Panc1 (cell line): ENCODE measurements at regions of chr1 and their contacts with region 1.

Region 1: DNA sequence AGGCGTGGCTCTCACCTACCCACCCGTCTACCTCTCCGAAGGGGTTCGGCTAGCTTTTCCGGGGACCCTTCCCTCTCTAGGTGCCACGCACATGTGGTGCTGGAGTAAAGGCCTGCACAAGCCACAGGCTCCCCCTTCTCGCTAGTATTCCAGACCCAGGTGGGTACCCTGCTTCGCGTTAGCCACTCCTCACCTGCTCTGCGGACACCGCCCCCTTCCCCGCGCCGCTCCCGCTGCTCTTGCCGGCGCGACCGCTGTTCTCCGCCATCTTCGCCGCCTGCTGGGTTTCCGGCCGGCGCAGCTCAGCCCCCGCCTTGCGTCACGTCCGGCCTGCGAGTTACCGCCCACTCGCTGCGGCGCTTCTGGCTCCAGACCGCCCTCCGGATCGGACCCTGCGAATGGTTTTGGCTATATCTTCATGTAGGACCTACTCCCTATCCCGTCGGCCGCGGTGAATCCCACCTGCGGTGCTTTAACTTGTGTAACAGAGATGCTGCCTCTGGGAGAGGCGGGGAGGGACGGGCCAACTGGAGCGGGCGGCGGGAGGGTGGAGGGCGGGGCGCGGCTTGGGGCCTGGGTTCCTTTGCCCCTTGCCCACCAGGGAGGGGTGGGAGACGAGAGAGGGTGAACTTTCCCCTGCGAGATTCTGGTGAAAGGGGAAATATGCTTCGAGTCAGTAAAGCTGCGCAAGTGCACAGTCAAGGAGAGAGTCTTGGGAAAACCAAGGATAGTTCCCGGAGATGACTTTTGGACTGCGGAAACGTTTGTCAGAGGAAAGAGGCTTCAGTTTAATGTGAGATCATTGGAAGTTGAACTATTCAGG is at the starts of genes NIT1 and PFDN2:
- DNase-seq: no peak
- ATAC-seq: peak; percentile 92
- H3K4me3 ChIP-seq: peak within 1 kb of the TSS; percentile 100
- H3K27ac ChIP-seq: peak within 1 kb of the TSS; percentile 98
- H3K4me1 ChIP-seq: peaks cover 36% of the 10 kb centered on the region
- H3K27me3 ChIP-seq: no peaks in the 10 kb centered on the region
- CTCF ChIP-seq: no peak
- total RNA-seq, gene NIT1: 31.3 TPM
- total RNA-seq, gene PFDN2: 98.6 TPM

Region 2: DNA sequence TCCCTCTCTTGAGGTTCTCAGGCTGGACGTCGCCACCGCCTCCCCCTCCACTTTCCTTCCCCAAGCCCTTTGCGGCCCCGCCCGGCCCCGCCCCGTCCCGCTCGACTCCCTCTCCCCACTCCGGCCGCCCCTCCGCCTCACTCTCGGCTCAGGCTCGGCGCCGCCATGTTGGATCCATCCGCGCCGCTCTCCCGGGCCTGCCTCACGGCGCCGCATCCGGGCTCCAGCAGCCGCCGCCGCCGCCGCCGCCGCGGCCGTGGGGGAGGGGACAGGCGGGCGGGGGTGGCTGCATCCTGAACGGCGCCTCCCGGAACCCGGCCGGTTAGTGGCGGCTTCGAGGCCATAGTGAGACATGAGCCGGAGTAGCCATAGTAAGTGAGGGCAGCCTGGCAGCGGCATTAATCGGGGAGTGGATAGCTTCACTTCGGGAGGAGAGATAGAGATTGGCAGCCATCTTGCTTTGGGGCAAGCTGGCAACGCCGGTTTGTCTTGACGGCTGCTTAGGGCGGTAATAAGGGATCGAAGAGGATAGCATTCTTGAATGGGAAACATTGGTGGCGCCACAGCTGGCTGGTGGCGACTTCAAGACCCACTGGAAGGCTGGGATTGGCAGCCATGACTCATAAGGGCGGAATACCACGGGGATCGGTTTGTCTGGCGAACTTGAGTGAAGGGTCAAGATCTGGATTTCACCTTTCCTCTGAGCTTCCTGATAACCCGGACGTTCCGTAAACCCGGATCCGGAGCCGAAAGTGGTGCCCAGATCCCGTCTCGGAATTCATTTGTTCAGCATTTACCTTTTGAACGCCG is 14.6 kb after region 1 on chr1 and contains the start of gene DEDD:
- CTCF ChIA-PET with region 1: interaction called, 3 read pairs
- POLR2A ChIA-PET with region 1: interaction called, 11 read pairs
- in situ Hi-C with region 1: no loop called
- intact Hi-C with region 1: no loop called
- DNase-seq: peak; percentile 66
- ATAC-seq: peak; percentile 96
- H3K4me3 ChIP-seq: peak within 1 kb of the TSS; percentile 96 to 99
- H3K27ac ChIP-seq: peak within 1 kb of the TSS; percentile 99
- H3K4me1 ChIP-seq: peaks cover 14% of the 10 kb centered on the region
- H3K27me3 ChIP-seq: no peaks in the 10 kb centered on the region
- CTCF ChIP-seq: no peak
- total RNA-seq, gene DEDD: 42.5 TPM